ENCODE measurements at regions of chr18 and their contacts with region 1.

Region 1: GRCh38 chr18:58541789-58542425 is 87.0 kb downstream of the ALPK2 start:
- DNase-seq: peak; percentile 73
- ATAC-seq: peak; percentile 87
- H3K4me3 Mint-ChIP-seq: no peak overlapping the region
- H3K27ac Mint-ChIP-seq: no peak overlapping the region
- H3K4me1 Mint-ChIP-seq: peaks cover 46% of the 10 kb centered on the region
- H3K27me3 Mint-ChIP-seq: peaks cover 45% of the 10 kb centered on the region

Region 2: GRCh38 chr18:58529714-58530354 is 12.1 kb before region 1 on chr18:
- CTCF ChIA-PET with region 1: interaction called, 13 read pairs
- DNase-seq: peak; percentile 74
- ATAC-seq: peak; percentile 78
- H3K4me3 Mint-ChIP-seq: no peak overlapping the region
- H3K27ac Mint-ChIP-seq: no peak overlapping the region
- H3K4me1 Mint-ChIP-seq: peaks cover 8% of the 10 kb centered on the region
- H3K27me3 Mint-ChIP-seq: peaks cover 46% of the 10 kb centered on the region

Measured in activated CD8-positive, alpha-beta memory T cell treated with anti-CD3 and anti-CD28 coated beads, Interleukin-2, amount 10 ng/mL, durations not matched to agents 7 days and 5 days (primary cell).